BJ (cell line): ENCODE measurements at regions of chr3 and their contacts with region 1.

Region 1: DNA sequence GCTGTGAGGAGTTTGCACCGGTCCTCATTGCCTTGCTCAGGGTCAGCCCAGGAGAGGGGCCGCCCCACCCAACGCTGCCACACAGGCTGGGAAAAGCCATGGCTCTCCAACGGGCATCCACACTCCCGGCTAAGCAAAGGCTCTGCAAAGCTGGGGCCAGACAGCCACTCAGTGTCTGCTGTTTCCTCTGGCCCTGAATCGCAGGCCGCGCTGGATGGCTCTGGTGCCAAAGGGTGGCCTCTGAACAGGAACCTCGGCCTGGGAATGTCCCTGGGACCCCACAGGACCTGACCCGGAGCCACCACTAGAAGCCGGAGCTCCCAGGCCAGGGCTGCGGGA is 42.9 kb downstream of the RPN1 start:
- DNase-seq: no peak
- H3K4me3 ChIP-seq: peak overlapping the region; percentile 50; the same call in 1 of the 2 replicates
- H3K27me3 ChIP-seq: no peaks in the 10 kb centered on the region
- CTCF ChIP-seq: no peak

Region 2: DNA sequence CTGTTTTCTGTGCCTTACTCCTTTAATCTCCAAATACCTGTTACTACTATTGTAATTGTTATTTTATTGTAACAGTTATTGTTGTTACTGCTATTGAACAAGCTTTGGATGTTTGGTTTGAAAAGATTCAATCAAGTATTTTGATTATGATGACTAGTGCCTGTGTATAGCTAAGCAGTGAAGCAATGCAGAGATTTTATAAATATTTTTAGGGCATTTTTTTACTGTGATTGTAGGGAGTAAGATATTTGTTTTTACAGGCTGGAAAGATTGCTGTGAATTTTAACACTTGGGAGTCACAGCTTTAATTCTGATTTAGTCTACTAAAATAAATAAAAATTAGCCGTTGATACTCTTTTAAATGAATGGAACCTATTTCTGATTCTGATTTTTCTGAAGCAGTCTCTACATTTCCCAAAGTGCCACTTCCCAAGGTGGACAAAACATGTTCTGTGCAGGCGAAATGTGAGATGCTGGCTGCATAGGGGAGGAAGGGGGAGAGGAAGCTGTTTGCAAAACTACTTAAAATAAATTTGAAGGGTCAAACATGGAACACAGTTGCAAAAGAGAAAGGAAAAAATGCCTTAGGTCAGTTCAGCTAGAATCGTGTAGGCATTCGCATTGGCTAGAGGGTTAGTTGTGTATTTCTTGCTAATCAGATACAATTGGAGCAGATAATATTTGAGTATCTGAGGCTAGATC is 428.7 kb before region 1 on chr3:
- CTCF ChIA-PET with region 1: interaction called, 10 read pairs
- POLR2A ChIA-PET with region 1: no interaction called
- DNase-seq: no peak
- H3K4me3 ChIP-seq: no peak overlapping the region
- H3K27me3 ChIP-seq: no peaks in the 10 kb centered on the region
- CTCF ChIP-seq: no peak

Region 3: GRCh38 chr3:128461731-128462130 is 145.9 kb before region 1 on chr3:
- CTCF ChIA-PET with region 1: no interaction called
- POLR2A ChIA-PET with region 1: no interaction called
- DNase-seq: no peak
- H3K4me3 ChIP-seq: no peak overlapping the region
- H3K27me3 ChIP-seq: peaks cover 22% of the 10 kb centered on the region
- CTCF ChIP-seq: no peak

Region 4: GRCh38 chr3:128505771-128506170 is 101.9 kb before region 1 on chr3:
- CTCF ChIA-PET with region 1: interaction called, 10 read pairs
- POLR2A ChIA-PET with region 1: no interaction called
- DNase-seq: no peak
- H3K4me3 ChIP-seq: no peak overlapping the region
- H3K27me3 ChIP-seq: no peaks in the 10 kb centered on the region
- CTCF ChIP-seq: no peak

Region 5: GRCh38 chr3:128559486-128560225 is 48.0 kb before region 1 on chr3:
- CTCF ChIA-PET with region 1: no interaction called
- POLR2A ChIA-PET with region 1: no interaction called
- DNase-seq: no peak
- H3K4me3 ChIP-seq: no peak overlapping the region
- H3K27me3 ChIP-seq: peaks cover 3% of the 10 kb centered on the region
- CTCF ChIP-seq: no peak

Region 6: DNA sequence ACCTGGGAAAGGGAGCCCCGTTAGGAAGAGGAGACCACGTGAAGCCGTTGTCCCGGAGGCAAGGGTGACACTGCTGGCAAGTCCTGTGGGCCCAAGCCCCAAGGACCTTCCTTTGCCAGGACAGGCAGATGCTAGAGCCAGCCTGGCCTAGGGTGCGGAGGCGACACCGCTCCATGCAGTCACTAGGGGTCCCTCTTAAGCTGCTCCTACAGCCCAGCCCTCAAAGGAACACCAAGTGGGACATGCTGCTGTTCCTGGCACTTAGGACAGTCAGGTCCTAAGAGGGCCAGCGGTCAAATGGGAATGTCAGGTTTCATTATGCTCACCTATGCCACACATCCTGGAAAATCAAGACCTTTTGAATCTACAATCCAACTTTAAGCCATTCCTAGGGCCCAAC is 16.7 kb before region 1 on chr3:
- CTCF ChIA-PET with region 1: interaction called, 21 read pairs
- POLR2A ChIA-PET with region 1: no interaction called
- DNase-seq: no peak
- H3K4me3 ChIP-seq: no peak overlapping the region
- H3K27me3 ChIP-seq: peaks cover 2% of the 10 kb centered on the region; the same call in 1 of the 2 replicates
- CTCF ChIP-seq: no peak

Region 7: DNA sequence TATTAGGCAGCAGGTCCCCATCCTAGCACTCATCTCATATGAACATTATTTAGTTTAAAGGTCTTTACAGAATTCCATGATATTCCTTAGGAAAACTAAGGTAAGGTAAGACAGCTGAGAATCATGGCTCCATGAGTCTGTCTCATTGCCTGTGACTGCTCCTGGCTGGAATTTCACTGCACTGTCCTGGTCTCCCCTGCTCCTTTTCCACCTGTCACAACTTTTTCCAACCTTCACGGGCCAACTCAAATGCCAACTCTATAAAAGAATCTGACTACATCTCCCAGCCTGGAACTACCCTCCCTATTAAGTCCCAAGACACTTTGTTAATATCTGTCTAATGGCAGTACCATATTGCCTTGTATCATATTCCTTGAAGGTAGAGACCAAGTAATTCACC is 568.4 kb after region 1 on chr3:
- CTCF ChIA-PET with region 1: no interaction called
- POLR2A ChIA-PET with region 1: no interaction called
- DNase-seq: no peak
- H3K4me3 ChIP-seq: no peak overlapping the region
- H3K27me3 ChIP-seq: no peaks in the 10 kb centered on the region
- CTCF ChIP-seq: no peak